Endothelial cell of umbilical vein (primary cell): ENCODE measurements at regions of chr7 and their contacts with region 1.

Region 1: GRCh38 chr7:143467722-143468121 is 10.0 kb upstream of the TAS2R41 start:
- DNase-seq: no peak
- H3K4me3 ChIP-seq: no peak overlapping the region
- H3K27ac ChIP-seq: no peak overlapping the region
- H3K4me1 ChIP-seq: peaks cover 3% of the 10 kb centered on the region
- H3K27me3 ChIP-seq: no peaks in the 10 kb centered on the region
- CTCF ChIP-seq: no peak
- POLR2A ChIP-seq: no peak

Region 2: GRCh38 chr7:143432201-143432600 is 35.5 kb before region 1 on chr7:
- CTCF ChIA-PET with region 1: no interaction called
- POLR2A ChIA-PET with region 1: no interaction called
- dilution Hi-C with region 1: no loop called
- intact Hi-C with region 1: loop called (anchors 2 kb)
- DNase-seq: no peak
- H3K4me3 ChIP-seq: no peak overlapping the region
- H3K27ac ChIP-seq: no peak overlapping the region
- H3K4me1 ChIP-seq: peaks cover 33% of the 10 kb centered on the region
- H3K27me3 ChIP-seq: no peaks in the 10 kb centered on the region
- CTCF ChIP-seq: no peak
- POLR2A ChIP-seq: no peak

Region 3: DNA sequence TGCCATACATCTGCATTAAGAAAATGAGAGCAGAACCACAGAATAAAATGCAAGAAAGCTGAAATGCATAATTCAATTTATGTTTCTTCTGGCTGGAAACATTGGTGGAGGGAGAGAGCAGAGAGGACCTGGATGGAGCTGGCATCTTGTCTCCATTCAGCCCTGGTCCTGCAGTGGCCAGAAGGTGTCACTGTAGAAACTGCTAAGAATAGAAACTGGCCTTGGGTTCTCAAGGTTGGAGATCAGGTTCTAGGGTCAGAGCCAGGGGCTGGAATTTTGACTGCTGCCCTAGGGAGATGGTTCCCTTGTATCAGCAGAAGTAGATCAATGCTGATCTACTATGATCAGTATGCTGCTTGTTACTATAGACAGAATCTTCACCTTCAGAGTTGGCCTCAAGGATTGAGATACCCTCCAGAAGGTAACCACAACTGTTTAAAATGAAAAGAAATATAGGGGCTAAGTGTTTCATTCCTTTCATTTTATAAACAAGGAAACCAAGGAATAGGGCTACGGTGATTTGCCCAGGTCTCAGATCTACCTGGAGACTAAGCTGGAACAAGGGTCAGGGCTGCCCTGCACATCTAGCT is 23.1 kb after region 1 on chr7:
- CTCF ChIA-PET with region 1: no interaction called
- POLR2A ChIA-PET with region 1: no interaction called
- dilution Hi-C with region 1: no loop called
- intact Hi-C with region 1: loop called (anchors 2 kb)
- DNase-seq: peak; percentile 58
- H3K4me3 ChIP-seq: no peak overlapping the region
- H3K27ac ChIP-seq: peak overlapping the region; percentile 99
- H3K4me1 ChIP-seq: peaks cover 43% of the 10 kb centered on the region
- H3K27me3 ChIP-seq: no peaks in the 10 kb centered on the region
- CTCF ChIP-seq: peak; percentile 60 to 66
- POLR2A ChIP-seq: no peak